Astrocyte of the cerebellum (primary cell): ENCODE measurements at regions of chr4 and their contacts with region 1.

Region 1: DNA sequence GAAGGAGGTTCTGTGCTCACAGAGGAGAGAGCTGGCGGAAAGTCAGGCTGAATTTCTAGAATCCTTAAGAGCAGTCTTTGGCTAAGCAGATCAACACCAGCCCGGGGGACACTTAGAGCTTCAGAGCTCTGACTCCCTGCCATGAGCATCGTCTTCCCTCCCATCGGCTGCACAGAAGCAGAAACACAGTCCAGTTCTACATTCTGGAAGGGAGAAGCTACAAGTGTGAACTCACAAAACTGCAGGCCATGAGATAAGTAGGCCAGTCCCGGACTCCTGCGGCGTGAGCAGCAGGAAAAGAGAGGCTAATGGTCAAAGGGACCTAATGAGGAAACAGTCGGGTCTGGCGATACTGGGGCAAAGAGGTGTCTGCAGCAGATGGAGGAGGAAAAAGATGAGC is 211.5 kb downstream of the DHX15 start:
- DNase-seq: no peak
- H3K4me3 ChIP-seq: no peak overlapping the region
- CTCF ChIP-seq: no peak

Region 2: DNA sequence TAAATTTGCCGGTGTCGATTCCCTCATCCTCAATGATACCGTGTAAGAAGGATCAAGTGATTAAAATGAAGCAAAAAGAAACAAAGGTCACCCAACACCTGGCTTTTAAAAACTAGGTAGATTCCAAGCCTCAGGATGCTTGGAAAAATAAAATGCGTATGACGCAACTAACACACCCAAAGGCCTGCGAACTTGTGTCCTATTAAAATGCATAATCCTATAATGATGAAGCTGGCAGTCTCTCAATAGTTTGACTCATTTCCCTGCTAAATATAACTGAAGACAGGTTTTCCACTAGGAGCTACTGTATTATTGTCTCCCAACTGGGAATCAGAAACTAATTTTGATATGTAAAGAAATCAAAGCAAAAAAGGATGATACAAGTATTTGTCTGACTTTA is 51.7 kb before region 1 on chr4:
- in situ Hi-C with region 1: loop called (anchors 5 kb)
- DNase-seq: peak; percentile 77
- H3K4me3 ChIP-seq: no peak overlapping the region
- CTCF ChIP-seq: no peak